RWPE1 (cell line): ENCODE measurements at regions of chr20 and their contacts with region 1.

Region 1: DNA sequence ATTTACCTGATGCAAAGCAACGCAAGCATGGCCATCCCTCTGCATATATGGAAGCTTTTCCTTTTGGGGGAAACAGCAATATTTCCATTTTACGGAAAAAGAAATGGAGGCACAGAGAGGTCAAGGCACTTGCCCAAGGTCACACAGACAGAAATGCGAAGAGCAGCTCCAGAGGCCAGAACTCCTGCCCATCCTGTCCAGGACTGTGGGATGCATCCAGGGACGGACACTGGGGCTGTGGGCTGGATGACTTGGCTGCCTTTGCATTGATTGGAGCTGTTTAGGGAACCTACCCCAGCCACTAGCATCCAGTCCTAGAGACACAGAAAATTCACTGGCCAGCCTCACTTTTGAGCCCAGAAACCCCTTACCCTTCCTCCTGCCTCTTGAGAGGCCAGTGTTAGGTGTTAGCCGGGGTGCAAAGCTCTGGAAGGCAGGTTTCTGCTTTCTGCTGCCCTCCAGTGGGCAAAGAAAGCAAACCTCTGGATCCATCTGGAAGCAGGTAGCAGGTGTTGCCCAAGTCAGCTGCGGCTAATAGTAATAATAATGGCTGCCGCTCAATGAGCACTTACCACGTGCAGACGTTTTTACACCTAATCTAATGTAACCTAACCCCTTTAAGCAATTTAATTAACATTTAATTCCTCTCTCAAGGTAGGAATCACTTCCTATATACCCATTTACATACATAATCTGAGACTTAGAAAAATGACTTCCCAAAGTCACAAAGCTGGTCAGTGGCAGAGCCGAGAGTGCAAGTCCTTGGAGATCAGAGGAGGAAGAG is 31.7 kb upstream of the CCN5 start:
- DNase-seq: peak; percentile 93
- H3K27ac ChIP-seq: no peak overlapping the region
- CTCF ChIP-seq: peak; percentile 94

Region 2: GRCh38 chr20:44609511-44610312 is 73.7 kb before region 1 on chr20:
- CTCF ChIA-PET with region 1: interaction called, 17 read pairs
- POLR2A ChIA-PET with region 1: no interaction called
- DNase-seq: peak; percentile 97
- H3K27ac ChIP-seq: peak overlapping the region; percentile 64
- CTCF ChIP-seq: peak; percentile 100

Region 3: GRCh38 chr20:44632103-44632752 is 51.2 kb before region 1 on chr20:
- CTCF ChIA-PET with region 1: no interaction called
- POLR2A ChIA-PET with region 1: no interaction called
- DNase-seq: no peak
- H3K27ac ChIP-seq: no peak overlapping the region
- CTCF ChIP-seq: no peak

Region 4: GRCh38 chr20:44720617-44720993 is 37.1 kb after region 1 on chr20:
- CTCF ChIA-PET with region 1: interaction called, 8 read pairs
- POLR2A ChIA-PET with region 1: interaction called, 12 read pairs
- DNase-seq: peak; percentile 93
- H3K27ac ChIP-seq: peak overlapping the region; percentile 90
- CTCF ChIP-seq: no peak

Region 5: DNA sequence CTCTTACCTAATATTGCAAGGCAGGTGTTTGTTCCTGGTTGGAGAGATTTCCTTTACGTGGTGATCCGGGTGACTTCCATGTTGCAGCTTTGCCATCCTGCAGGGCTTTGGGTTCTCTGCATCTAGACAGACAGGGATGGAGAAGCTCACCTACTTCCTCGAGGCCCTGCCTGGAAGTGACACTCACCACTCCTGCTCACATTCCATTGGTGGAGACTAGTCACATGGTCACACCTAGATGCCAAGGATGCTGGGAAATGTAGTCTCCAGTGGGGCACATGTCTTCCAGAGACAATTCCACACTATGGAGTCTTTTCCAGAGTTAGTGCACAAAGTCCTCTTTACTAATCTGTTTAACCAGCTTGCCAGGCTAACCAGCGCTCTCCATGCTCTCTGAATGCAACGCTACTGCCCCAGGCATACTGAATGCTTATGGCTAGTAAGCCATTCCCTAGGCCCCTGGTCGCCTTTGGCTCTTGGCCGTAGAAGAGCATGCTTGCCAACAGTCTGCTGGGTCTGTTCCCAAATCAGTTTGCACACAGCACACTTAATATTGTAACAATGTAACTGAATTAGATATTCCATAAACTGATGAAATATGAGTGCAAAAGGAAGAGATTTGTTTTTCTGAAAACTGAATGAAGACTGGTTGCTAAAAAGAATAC is 55.5 kb after region 1 on chr20:
- CTCF ChIA-PET with region 1: interaction called, 184 read pairs
- POLR2A ChIA-PET with region 1: no interaction called
- DNase-seq: peak; percentile 97
- H3K27ac ChIP-seq: no peak overlapping the region
- CTCF ChIP-seq: no peak

Region 6: GRCh38 chr20:44866703-44867335 is 183.4 kb after region 1 on chr20:
- CTCF ChIA-PET with region 1: interaction called, 18 read pairs
- POLR2A ChIA-PET with region 1: no interaction called
- DNase-seq: no peak
- H3K27ac ChIP-seq: no peak overlapping the region
- CTCF ChIP-seq: no peak

Region 7: GRCh38 chr20:45406259-45407066 is 723.0 kb after region 1 on chr20:
- CTCF ChIA-PET with region 1: no interaction called
- POLR2A ChIA-PET with region 1: no interaction called
- DNase-seq: peak; percentile 77
- H3K27ac ChIP-seq: peak overlapping the region; percentile 74
- CTCF ChIP-seq: no peak